Natural killer cell (primary cell): ENCODE measurements at regions of chr3 and their contacts with region 1.

Region 1: DNA sequence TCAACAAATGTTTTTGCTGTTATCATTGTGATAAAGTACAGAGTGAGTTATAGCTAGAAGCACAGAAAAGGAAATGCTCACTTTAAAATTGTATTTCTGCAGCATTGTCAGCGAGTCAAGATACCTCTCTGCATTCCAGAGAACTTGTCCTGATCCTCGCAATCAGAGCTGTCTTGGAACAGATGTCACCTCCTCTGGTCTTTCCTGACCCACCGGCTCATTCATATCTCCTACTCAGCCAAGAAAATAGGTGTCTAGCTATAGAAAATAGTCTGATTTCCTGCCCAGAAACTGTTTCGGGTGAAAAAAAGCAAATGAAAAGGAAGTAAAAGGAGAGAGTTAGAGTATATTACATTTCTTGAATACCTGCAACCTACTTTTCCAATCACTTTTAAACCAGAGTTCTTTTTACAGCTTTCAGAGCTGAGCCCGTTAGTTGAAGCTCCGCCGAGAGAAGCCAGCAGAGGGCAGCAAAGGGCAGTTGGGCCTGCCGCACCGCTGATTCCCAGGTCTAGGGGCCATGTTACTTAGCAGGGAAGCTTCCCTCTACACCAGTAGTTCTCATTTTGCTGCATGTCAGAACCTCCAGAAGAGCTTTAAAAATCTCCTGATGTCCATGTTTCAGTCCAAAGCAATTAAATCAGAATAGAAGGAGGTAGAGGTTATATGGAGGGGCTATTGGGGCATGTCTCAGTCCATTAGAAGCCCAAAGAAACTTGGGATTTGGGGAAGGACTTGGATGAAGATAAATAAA is 185.7 kb upstream of the THRB start:
- DNase-seq: peak; percentile 32 to 60
- ATAC-seq: peak; percentile 74 to 80 (median 80)
- H3K4me3 ChIP-seq: no peak overlapping the region
- H3K4me3 Mint-ChIP-seq: peak overlapping the region; percentile 75
- H3K27ac ChIP-seq: no peak overlapping the region
- H3K27ac Mint-ChIP-seq: no peak overlapping the region
- H3K4me1 ChIP-seq: peaks cover 4% of the 10 kb centered on the region
- H3K4me1 Mint-ChIP-seq: peaks cover 37 to 38% of the 10 kb centered on the region in 2 donors
- H3K27me3 ChIP-seq: peaks cover 2% of the 10 kb centered on the region
- H3K27me3 Mint-ChIP-seq: peaks cover 35 to 77% of the 10 kb centered on the region in 2 donors
- CTCF ChIP-seq: peak; percentile 87

Region 2: DNA sequence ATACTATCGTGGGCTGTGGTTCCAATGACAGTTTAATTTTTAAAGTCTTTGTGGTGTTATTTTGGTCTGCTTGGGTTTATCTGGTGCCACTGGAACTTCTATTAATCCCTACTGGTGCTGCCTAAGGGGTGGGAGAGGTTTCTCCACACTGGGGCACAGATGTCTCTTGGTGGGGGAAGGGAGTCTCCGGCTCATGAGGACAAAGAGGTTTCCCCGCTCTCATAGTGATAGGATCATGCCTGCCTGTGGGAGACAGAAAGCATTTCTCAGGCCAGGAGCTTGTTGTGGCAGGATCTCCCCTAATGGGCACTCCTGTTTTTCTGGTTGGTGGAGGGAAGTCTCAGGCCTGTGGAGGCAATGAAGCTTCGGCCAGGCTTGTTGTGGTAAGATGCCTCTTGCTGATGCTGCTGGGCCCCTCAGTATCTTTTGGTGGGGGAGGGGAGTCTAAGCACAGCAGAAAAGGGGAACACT is 101.4 kb before region 1 on chr3:
- intact Hi-C with region 1: no loop called
- DNase-seq: no peak
- ATAC-seq: no peak
- H3K4me3 ChIP-seq: no peak overlapping the region
- H3K4me3 Mint-ChIP-seq: no peak overlapping the region
- H3K27ac ChIP-seq: no peak overlapping the region
- H3K27ac Mint-ChIP-seq: no peak overlapping the region
- H3K4me1 ChIP-seq: no peaks in the 10 kb centered on the region
- H3K4me1 Mint-ChIP-seq: no peaks in the 10 kb centered on the region
- H3K27me3 ChIP-seq: no peaks in the 10 kb centered on the region
- H3K27me3 Mint-ChIP-seq: peaks cover 0 to 2% of the 10 kb centered on the region in 2 donors
- CTCF ChIP-seq: no peak

Region 3: GRCh38 chr3:24773798-24774197 is 93.4 kb after region 1 on chr3:
- intact Hi-C with region 1: loop called (anchors 5 kb)
- DNase-seq: no peak
- ATAC-seq: peak in 1 of 3 donors; percentile 55
- H3K4me3 ChIP-seq: no peak overlapping the region
- H3K4me3 Mint-ChIP-seq: no peak overlapping the region
- H3K27ac ChIP-seq: no peak overlapping the region
- H3K27ac Mint-ChIP-seq: no peak overlapping the region
- H3K4me1 ChIP-seq: no peaks in the 10 kb centered on the region
- H3K4me1 Mint-ChIP-seq: peaks cover 0 to 5% of the 10 kb centered on the region in 2 donors
- H3K27me3 ChIP-seq: no peaks in the 10 kb centered on the region
- H3K27me3 Mint-ChIP-seq: peaks cover 7 to 15% of the 10 kb centered on the region in 2 donors
- CTCF ChIP-seq: peak; percentile 41

Region 4: DNA sequence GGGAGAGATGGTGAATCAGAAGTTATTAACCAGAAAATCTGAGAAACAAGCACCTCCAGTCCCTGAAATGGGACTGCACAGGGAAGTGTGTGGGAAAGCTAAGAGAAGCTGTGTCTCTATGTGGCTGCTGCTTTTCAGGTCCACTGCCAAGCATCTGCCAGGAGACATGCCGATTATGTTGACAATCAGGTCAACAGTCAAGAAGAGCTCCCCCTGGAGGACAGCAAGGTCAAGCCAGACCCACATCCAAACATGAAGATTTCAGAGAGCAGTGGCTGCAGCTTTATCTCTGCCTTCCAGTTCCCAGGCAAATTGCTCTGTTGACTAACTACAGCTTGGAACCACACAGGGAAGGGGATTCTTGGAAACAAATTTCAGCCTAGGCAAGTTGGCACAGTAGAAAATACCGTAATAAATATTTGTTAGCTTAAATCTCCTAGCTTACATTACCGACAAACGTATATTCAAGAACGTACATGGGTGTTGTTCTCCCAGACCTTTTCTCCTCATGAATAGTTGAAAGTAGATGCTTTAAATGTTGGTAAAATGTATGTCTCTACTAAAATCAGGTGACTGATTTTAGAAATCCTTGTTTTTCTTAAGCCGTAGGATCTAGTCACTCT is 353.1 kb after region 1 on chr3:
- intact Hi-C with region 1: loop called (anchors 2 kb)
- DNase-seq: peak in 1 of 2 donors; percentile 4
- ATAC-seq: peak in 1 of 3 donors; percentile 47
- H3K4me3 ChIP-seq: no peak overlapping the region
- H3K4me3 Mint-ChIP-seq: no peak overlapping the region
- H3K27ac ChIP-seq: no peak overlapping the region
- H3K27ac Mint-ChIP-seq: no peak overlapping the region
- H3K4me1 ChIP-seq: no peaks in the 10 kb centered on the region
- H3K4me1 Mint-ChIP-seq: no peaks in the 10 kb centered on the region
- H3K27me3 ChIP-seq: no peaks in the 10 kb centered on the region
- H3K27me3 Mint-ChIP-seq: peaks cover 0 to 4% of the 10 kb centered on the region in 2 donors
- CTCF ChIP-seq: peak; percentile 54